MCF 10A (cell line): ENCODE measurements at regions of chr20 and their contacts with region 1.

Region 1: DNA sequence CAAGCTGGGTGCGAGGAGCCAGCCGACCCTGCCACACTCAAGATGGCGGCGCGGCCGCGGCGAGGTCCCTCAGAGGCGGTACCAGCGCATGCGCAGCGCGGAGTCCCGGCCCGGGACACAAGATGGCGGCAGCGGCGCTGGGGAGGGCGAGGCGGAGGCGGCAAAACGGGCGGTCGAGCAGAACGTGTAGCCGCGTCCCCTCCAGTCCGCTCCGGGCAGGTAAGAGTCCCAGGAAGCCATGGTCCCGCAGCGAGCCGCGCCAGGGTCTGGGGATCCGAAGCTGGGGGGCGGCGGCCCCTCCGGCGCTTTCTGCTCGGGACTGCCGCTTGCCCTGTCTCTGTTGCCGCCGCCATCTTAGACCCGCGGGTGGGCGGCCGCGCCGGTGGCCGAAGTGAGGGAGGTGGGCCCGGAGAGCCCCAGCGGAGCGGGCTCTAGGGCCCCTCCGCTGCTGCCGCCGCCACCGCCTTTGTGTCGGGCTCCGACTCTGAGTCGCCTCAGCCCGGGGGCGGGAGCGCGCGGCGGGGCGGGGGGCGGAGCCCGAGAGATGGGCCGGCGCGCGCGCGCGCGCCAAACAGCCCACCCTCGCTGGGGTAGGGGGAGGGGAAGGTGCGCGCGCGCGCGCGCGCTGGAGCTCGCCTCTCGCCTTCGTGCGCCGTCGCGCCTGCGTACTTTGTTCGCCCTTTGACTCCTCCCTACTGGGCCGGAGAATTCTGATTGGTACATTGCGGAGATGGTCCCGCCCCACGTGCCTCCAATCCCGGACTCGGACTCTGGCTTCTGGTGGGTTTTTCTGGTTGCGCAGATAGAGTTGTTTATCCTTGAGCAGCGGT is at the start of gene PCIF1:
- DNase-seq: peak; percentile 97
- H3K4me3 Mint-ChIP-seq: peak within 1 kb of the TSS; percentile 94
- H3K27ac Mint-ChIP-seq: peak within 1 kb of the TSS; percentile 92
- H3K4me1 Mint-ChIP-seq: no peaks in the 10 kb centered on the region
- H3K27me3 Mint-ChIP-seq: no peaks in the 10 kb centered on the region
- CTCF ChIP-seq: no peak
- total RNA-seq, gene PCIF1: 14.3 and 20.5 TPM in 2 replicates

Region 2: DNA sequence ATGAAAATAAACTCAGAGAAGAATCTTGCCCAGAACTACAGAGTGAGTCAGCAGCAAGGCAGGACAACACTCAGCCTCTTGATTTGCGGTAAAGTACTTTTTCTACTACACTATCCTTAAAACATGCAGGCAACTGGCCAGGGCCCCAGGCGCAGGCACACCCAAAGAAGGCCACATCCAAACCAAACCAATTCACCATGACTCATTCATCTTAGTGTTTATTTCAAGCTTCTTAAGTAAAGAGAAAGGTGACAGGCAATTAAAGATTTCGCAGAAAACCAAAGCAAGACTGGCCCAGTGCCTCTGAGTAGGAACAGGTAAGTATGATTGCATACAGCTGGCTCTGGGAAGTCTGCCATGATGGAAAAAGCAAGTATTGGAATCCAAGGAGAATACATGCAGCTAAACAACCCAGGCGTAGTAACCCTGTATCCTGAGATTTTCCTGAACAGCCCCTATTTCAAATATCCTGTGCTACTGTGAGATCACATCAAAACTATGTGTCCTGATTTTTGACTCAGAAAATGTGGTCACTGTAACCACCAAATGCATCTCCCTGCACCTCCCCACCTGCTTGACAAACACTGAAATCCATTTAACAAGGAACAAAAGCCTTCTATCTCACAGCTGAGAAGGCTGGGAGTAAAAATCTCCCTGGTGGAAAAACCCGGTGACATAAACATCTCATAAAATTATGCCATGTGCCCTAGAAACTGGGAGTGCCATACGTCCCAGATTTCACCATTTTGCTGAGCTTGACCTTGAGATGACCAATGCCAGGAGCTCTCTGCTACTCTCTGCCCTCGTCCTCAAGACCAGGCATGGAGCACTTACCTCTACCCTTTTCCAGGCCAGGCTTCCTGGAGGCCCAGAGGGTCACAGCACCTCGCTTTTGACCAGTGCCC is 155.5 kb before region 1 on chr20:
- CTCF ChIA-PET with region 1: no interaction called
- POLR2A ChIA-PET with region 1: interaction called, 18 read pairs
- intact Hi-C with region 1: no loop called
- DNase-seq: peak; percentile 98
- H3K4me3 Mint-ChIP-seq: no peak overlapping the region
- H3K27ac Mint-ChIP-seq: peak overlapping the region; percentile 88
- H3K4me1 Mint-ChIP-seq: peaks cover 58% of the 10 kb centered on the region
- H3K27me3 Mint-ChIP-seq: peaks cover 3% of the 10 kb centered on the region
- CTCF ChIP-seq: no peak

Region 3: DNA sequence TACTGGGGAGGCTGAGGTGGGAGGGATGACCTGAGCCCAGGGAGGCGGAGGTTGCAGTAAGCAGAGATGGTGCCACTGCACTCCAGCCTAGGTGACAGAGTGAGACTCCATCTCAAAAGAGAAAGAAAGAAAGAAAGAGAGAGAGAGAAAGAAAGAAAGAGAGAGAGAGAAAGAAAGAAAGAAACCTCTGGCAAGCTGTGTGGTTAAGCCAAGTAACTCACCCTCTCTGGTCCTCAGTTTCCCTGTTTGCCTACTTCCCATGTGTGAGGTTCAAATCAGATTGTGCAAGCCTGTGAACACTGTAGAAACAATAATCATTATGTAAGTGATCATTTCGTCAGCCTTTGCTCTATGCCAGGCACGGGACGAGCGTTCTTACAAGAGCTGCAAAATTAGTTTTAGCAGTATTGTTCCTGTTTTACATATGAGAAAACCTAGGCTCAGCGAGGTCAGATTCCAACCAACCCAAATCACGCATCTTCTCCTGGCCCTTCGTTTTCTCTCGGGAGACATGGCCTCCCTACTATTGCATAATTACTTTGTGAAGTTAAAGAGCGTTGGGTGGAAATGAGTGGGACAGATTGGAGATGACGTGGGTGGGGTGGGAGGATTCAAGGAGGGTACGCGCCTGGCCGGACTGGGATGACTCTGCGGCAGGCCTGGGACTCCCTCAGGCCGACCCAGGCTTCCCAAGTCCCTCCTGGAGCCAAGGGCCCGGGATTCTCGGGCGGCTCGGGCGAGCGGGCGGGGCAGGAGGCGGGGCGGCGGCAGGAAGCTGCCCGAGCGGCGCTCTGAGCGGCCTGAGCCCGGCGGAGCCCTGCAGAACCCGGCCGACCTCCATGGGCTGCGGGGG is 101.5 kb before region 1 on chr20 and contains the start of gene SNX21:
- CTCF ChIA-PET with region 1: no interaction called
- POLR2A ChIA-PET with region 1: interaction called, 29 read pairs
- intact Hi-C with region 1: no loop called
- DNase-seq: peak; percentile 83
- H3K4me3 Mint-ChIP-seq: peak within 1 kb of the TSS; percentile 80
- H3K27ac Mint-ChIP-seq: peak within 1 kb of the TSS; percentile 84
- H3K4me1 Mint-ChIP-seq: peaks cover 26% of the 10 kb centered on the region
- H3K27me3 Mint-ChIP-seq: no peaks in the 10 kb centered on the region
- CTCF ChIP-seq: no peak
- total RNA-seq, gene SNX21: 8.5 and 13.9 TPM in 2 replicates

Region 4: DNA sequence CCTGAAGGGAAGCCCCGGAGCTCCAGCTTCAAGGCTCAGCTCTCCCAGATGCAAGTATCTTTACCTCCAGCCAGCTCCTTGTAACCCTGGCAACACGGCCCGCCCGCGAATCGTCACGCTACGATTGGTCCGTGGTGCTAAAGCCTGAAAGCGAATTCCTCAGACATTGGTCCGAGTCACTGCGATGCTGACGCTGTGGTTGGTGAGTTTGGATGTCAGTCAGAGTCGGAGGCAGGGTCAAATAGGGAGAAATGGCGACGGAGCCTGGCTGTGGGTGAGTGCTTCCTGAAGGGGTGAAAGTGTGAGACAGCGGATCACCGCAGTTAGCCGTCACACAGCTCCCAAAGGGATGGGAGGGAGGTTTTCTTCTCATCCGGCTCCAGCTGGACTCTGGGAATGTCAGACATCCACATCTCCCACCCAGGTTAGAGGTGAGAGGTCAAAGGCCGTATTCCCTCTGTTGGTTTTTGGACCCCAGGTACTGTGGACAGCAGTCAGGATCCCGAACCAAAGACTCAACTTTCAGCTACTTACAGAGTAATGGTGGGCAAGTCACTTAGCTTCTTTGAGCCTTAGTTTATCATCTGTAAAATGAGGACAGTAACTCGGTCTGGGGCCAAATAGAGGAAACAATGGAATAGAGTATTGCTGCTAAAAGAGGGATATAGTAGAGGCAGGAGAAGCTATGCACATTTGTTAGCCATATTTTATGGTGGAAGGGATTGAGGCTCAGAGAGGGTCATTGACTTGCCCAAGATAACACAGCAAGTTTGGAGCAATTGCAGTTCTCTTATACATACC is 53.6 kb before region 1 on chr20 and contains the start of gene ZSWIM1:
- CTCF ChIA-PET with region 1: interaction called, 4 read pairs
- POLR2A ChIA-PET with region 1: interaction called, 39 read pairs
- intact Hi-C with region 1: no loop called
- DNase-seq: peak; percentile 99
- H3K4me3 Mint-ChIP-seq: peak within 1 kb of the TSS; percentile 97
- H3K27ac Mint-ChIP-seq: peak within 1 kb of the TSS; percentile 97
- H3K4me1 Mint-ChIP-seq: peaks cover 21% of the 10 kb centered on the region
- H3K27me3 Mint-ChIP-seq: no peaks in the 10 kb centered on the region
- CTCF ChIP-seq: no peak
- total RNA-seq, gene ZSWIM1: 7.6 and 10.3 TPM in 2 replicates

Region 5: DNA sequence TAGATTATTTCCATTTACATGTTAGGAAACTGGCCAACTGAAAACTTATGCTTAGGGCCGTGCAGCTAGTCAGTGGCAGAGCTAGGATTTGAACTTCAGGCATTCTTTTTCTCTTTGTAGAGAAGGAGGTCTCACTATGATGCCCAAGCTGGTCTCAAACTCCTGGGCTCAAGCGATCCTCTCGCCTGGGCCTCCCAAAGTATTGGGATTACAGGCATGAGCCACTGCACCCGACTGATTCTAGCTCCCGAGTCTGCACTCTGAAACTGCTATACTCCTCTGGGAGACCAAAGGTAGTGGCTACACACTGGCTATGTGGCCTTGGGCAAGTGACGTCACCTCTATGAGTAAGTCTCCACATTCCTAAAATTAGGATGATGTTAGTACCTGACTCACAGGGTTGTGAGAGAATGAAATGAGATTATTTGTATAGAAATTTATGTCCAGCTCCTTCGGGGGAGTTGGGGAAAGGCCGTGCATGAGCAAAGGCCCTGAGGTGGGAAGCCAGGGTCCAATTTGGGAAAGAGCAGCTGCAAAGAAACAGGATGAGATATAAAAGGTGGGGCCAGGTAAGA is 29.2 kb before region 1 on chr20:
- CTCF ChIA-PET with region 1: interaction called, 7 read pairs
- POLR2A ChIA-PET with region 1: interaction called, 30 read pairs
- intact Hi-C with region 1: no loop called
- DNase-seq: peak; percentile 91
- H3K4me3 Mint-ChIP-seq: peak overlapping the region; percentile 2
- H3K27ac Mint-ChIP-seq: peak overlapping the region; percentile 55
- H3K4me1 Mint-ChIP-seq: peaks cover 9% of the 10 kb centered on the region
- H3K27me3 Mint-ChIP-seq: no peaks in the 10 kb centered on the region
- CTCF ChIP-seq: no peak

Region 6: GRCh38 chr20:45946149-45946970 is 11.6 kb after region 1 on chr20:
- CTCF ChIA-PET with region 1: interaction called, 10 read pairs
- POLR2A ChIA-PET with region 1: interaction called, 117 read pairs
- intact Hi-C with region 1: loop called (anchors 1 kb)
- DNase-seq: peak; percentile 74
- H3K4me3 Mint-ChIP-seq: peak overlapping the region; percentile 21
- H3K27ac Mint-ChIP-seq: peak overlapping the region; percentile 85
- H3K4me1 Mint-ChIP-seq: peaks cover 24% of the 10 kb centered on the region
- H3K27me3 Mint-ChIP-seq: no peaks in the 10 kb centered on the region
- CTCF ChIP-seq: no peak

Region 7: DNA sequence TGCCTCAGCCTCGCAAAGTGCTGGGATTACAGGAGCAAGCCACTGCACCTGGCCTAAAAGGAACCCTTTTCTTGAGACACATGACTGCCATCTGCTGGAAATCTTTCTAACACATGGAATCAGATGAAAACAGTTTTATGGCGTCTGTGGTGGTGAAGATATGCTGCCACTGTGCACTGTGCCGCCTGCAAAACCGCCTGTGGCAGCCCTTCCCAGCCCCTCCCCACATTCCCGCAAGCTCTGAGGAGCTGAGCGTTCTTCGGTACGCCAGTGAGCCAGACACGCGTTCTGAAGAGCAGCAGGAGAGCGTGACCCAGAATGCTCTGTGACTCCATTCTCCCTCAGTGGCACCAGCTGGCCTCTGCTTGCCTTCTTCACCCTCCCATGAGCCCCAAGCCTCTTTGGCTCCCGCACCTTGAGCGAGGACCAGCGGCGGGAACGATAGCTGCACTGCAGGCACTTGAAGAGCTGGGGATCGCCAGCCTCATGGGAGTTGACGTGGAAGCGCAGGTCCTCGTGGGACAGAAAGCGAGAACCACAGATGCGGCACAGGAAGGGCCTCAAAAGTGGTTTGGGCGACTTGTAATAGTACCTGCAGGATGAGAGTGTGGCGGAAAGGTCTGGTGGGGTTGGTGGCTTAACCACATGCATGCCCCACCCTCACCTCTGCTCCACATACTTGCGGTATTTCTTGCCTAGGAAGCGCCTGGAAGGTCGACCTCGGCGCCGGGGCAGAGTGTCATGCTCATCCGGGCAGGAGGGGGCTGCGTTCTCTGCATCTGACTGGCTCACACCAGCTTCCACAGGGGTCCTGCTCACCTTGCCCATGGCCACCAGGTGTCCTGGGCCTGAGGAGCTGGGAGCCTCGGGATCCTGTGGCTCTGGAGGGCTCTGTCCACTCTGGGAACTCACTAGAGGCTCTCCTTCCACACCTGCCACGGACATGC is 28.5 kb after region 1 on chr20:
- CTCF ChIA-PET with region 1: interaction called, 9 read pairs
- POLR2A ChIA-PET with region 1: interaction called, 21 read pairs
- intact Hi-C with region 1: loop called (anchors 2 kb)
- DNase-seq: peak; percentile 63
- H3K4me3 Mint-ChIP-seq: no peak overlapping the region
- H3K27ac Mint-ChIP-seq: no peak overlapping the region
- H3K4me1 Mint-ChIP-seq: no peaks in the 10 kb centered on the region
- H3K27me3 Mint-ChIP-seq: no peaks in the 10 kb centered on the region
- CTCF ChIP-seq: peak; percentile 44